ENCODE measurements at regions of chr4 and their contacts with region 1.

Region 1: DNA sequence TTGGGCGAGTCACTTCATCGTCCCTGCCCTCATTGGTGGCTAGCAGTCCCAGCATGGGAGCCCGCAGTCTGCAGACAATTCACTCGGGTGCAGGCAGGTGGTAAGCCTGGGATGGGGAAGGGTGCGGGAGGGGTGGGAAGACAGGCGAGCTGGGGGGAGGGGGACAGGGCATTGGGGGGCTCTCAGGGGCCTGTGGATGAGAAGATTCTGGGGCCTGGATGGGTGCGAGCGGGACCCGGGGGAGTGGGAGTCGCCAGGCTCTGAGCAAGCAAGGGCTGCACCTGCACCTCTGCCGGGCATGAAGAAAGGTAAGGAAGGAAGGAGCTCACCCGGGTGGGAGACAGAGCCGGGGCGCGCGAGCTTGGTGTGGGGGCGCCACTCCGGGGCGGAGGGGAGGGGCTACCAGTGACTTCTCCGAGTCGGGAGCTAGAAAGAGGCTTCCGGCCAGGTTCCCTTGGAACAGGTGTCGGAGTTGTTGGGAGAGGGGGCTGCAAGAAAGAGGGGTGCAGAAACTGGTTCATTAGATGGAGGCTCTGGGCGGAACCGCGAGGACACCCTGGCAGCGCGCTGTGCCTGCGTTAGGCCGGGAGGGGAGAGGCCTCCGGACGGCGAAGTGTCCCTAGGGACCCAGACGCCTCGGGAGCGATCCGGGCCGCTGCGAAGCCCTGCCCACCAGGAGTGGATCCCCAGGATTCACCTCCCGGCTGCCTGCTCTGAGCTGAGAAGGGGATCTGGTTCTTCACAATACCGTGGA is 103.4 kb upstream of the PDLIM3 start:
- DNase-seq: no peak
- H3K4me3 ChIP-seq: peak overlapping the region in 3 of 4 donors; percentile 17 to 47 (median 21)
- H3K27ac ChIP-seq: peak overlapping the region in 3 of 4 donors; percentile 5 to 16 (median 6)
- H3K4me1 ChIP-seq: peaks cover 0 to 22% (median 0%) of the 10 kb centered on the region in 3 donors
- H3K27me3 ChIP-seq: peaks cover 0 to 8% (median 0%) of the 10 kb centered on the region in 4 donors
- CTCF ChIP-seq: no peak
- POLR2A ChIP-seq: no peak

Region 2: DNA sequence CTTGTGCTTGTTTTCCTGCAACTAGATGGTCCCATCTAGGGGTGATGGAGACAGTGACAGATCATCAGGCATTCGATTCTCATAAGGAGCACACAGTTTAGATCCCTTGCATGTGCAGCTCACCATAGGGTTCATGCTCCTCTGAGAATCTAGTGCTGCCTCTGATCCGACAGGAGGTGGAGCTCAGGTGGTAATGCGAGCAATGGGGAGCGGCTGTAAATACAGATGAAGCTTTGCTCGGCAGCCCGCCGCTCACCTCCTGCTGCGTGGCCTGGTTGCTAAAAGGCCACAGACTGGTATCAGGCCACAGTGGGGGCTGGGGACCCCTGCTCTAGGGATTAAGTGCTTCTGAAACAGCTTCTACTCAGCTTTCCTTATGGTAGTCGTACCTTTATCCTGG is 138.7 kb before region 1 on chr4:
- intact Hi-C with region 1: no loop called
- DNase-seq: no peak
- H3K4me3 ChIP-seq: no peak overlapping the region
- H3K27ac ChIP-seq: no peak overlapping the region
- H3K4me1 ChIP-seq: no peaks in the 10 kb centered on the region
- H3K27me3 ChIP-seq: no peaks in the 10 kb centered on the region
- CTCF ChIP-seq: no peak
- POLR2A ChIP-seq: no peak

Region 3: DNA sequence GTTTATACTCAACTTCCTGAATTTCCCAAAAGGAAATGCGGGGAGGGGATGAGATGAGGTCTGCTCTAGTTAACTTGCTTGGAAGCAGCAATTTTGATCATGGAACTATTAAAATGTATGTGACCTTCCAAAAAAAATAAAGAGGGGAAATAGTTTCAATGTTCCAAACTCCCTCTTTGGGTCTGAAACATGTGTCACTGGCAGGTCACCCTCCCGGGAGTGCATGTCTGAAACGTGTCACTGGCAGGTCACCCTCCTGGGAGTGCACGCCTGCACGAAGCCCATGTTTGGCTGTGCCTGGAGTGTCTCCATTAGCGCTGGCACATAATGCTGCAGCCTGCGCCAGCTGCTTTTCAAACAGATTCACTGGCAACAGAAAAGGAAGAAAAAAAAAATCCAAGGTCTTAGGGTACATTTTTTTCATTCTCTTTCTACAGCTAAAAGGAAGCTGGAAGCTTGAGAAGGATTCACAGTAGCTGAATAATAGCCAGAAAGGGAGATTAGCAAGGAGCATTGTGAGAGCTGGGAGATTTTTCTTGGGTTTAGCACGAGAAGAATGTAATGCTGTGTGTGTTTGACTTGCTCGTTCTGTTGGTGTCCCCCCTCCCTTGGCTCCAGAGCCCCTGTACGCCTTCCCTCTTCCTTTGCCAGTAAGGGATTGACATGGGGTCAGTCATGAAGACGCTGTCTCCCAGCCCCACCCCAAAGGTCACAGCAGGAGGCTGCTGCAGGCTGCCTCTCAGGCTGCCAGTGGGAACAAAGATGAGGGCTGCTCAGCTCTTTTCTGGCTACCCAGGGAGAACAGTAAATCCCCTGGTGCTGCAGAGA is 391.1 kb after region 1 on chr4:
- intact Hi-C with region 1: loop called (anchors 5 kb)
- DNase-seq: no peak
- H3K4me3 ChIP-seq: peak overlapping the region in 3 of 4 donors; percentile 1 to 44 (median 10)
- H3K27ac ChIP-seq: peak overlapping the region; percentile 78 to 87 (median 84)
- H3K4me1 ChIP-seq: peaks cover 23 to 77% (median 24%) of the 10 kb centered on the region in 3 donors
- H3K27me3 ChIP-seq: no peaks in the 10 kb centered on the region
- CTCF ChIP-seq: no peak
- POLR2A ChIP-seq: no peak

Measured in esophagus squamous epithelium (tissue), 5 donors.